ENCODE measurements at regions of chr6 and their contacts with region 1.

Region 1: GRCh38 chr6:29847871-29848630 is 20.4 kb downstream of the HLA-G start:
- DNase-seq: peak; percentile 77 to 92 (median 90)
- ATAC-seq: peak; percentile 82
- H3K4me3 ChIP-seq: no peak overlapping the region
- H3K4me1 ChIP-seq: no peaks in the 10 kb centered on the region
- CTCF ChIP-seq: peak; percentile 73

Region 2: GRCh38 chr6:29864037-29864795 is 16.2 kb after region 1 on chr6:
- intact Hi-C with region 1: no loop called
- DNase-seq: no peak
- ATAC-seq: no peak
- H3K4me3 ChIP-seq: no peak overlapping the region
- H3K4me1 ChIP-seq: no peaks in the 10 kb centered on the region
- CTCF ChIP-seq: no peak

Region 3: GRCh38 chr6:30013291-30013922 is 165.4 kb after region 1 on chr6:
- intact Hi-C with region 1: loop called (anchors 2 kb)
- DNase-seq: peak in 2 of 3 donors; percentile 19 to 84
- ATAC-seq: peak; percentile 76
- H3K4me3 ChIP-seq: no peak overlapping the region
- H3K4me1 ChIP-seq: no peaks in the 10 kb centered on the region
- CTCF ChIP-seq: peak; percentile 90

Region 4: GRCh38 chr6:30130887-30131862 is 283.1 kb after region 1 on chr6:
- intact Hi-C with region 1: loop called in 1 of 2 experiments (anchors 10 kb)
- DNase-seq: peak in 1 of 3 donors; percentile 81
- ATAC-seq: peak; percentile 86
- H3K4me3 ChIP-seq: no peak overlapping the region
- H3K4me1 ChIP-seq: peaks cover 17% of the 10 kb centered on the region
- CTCF ChIP-seq: peak; percentile 92